PC-9 (cell line): ENCODE measurements at regions of chr5 and their contacts with region 1.

Region 1: DNA sequence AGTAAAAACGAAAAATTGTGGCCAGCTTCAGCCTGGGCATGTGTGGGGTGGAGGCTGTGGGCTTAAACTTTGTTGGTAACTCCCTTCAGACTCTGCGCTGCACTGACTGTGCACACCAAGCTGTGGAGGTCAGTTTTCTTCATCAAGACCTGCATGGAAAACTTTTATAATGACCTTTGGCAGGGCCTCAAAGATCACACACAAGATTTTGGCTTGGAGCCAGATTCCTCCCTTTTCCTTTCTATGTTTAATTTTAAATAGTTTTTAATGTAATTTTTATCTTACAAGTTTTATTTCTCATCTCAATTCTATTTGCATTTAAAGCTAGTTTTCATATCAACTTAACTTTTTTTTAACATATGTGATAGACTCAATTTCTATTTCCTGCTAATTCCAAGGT is 1211.1 kb upstream of the CDH18 start:
- DNase-seq: no peak
- H3K4me3 ChIP-seq: no peak overlapping the region
- H3K27ac ChIP-seq: no peak overlapping the region
- H3K4me1 ChIP-seq: no peaks in the 10 kb centered on the region
- H3K27me3 ChIP-seq: no peaks in the 10 kb centered on the region
- CTCF ChIP-seq: no peak

Region 2: GRCh38 chr5:21212026-21212425 is 12.9 kb after region 1 on chr5:
- CTCF ChIA-PET with region 1: no interaction called
- POLR2A ChIA-PET with region 1: interaction called, 19 read pairs
- intact Hi-C with region 1: no loop called
- DNase-seq: no peak
- H3K4me3 ChIP-seq: no peak overlapping the region
- H3K27ac ChIP-seq: no peak overlapping the region
- H3K4me1 ChIP-seq: no peaks in the 10 kb centered on the region; the same call in 1 of the 2 replicates
- H3K27me3 ChIP-seq: no peaks in the 10 kb centered on the region
- CTCF ChIP-seq: no peak